ENCODE measurements at regions of chr20 and their contacts with region 1.

Region 1: GRCh38 chr20:21235484-21236445 is 67.4 kb upstream of the XRN2 start:
- DNase-seq: peak; percentile 66
- ATAC-seq: peak; percentile 86

Region 2: DNA sequence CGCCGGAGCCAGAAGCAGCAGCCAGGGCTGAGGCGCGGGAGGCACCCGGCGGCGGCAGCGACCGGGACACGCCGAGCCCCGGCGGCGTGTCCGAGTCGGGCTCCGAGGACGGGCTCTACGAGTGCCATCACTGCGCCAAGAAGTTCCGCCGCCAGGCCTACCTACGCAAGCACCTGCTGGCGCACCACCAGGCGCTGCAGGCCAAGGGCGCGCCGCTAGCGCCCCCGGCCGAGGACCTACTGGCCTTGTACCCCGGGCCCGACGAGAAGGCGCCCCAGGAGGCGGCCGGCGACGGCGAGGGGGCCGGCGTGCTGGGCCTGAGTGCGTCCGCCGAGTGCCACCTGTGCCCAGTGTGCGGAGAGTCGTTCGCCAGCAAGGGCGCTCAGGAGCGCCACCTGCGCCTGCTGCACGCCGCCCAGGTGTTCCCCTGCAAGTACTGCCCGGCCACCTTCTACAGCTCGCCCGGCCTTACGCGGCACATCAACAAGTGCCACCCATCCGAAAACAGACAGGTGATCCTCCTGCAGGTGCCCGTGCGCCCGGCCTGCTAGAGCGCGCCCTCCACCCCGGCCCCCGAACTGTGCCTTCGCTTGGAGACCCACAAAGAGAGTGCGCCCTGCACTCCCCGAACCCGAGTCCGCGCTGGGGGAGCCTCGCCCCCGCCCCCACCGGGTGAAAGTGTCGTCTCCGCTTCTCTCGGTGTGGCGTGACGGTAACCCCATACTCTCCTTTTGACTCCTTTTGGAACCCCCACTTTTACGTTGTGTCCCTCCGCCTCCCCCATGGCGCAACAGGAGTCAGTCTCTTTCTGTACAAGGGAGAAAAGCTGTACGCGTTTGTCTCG is 866.3 kb before region 1 on chr20:
- intact Hi-C with region 1: no loop called
- DNase-seq: no peak
- ATAC-seq: peak; percentile 36

Region 3: DNA sequence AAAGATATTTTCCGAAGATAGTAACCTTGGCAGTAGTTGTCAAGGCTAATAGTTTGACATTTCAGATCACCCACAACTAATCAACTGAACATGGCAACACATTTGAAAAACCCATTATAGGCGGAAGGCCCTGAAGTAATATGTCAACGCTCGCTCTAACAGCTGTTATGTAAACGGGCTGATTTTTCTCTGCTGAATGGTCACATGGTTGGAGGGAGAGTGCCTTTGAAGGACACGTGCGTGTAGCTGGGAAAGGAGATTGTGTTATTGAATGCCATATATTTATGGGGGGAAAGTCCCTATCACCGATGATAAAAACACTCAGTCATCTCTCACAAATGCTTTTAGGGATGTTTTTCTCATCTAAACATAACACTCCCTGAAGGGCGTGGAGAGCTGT is 363.3 kb before region 1 on chr20:
- intact Hi-C with region 1: loop called (anchors 10 kb)
- DNase-seq: no peak
- ATAC-seq: no peak

Region 4: DNA sequence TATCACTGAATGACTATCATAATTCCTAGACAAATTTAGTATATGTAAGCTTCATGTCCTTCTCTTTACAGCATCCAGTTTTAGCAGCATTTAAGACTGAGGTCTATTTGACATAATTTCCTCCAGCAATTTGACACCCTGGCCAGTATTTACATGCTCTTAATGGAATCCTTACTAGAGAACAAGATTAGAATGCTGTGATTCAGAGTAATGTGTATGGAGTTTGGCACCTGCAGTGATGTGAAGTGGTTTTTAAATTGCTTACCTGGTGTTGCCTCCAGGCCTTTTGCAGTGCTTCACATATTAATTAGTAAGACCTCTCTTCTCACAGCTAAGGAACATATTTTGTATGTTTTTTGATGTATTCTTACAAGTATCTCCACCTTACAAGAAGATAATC is 151.8 kb after region 1 on chr20:
- intact Hi-C with region 1: no loop called
- DNase-seq: no peak
- ATAC-seq: no peak

Region 5: GRCh38 chr20:21505161-21505809 is 269.5 kb after region 1 on chr20:
- intact Hi-C with region 1: loop called (anchors 2 kb)
- DNase-seq: peak; percentile 84
- ATAC-seq: peak; percentile 87

Region 6: GRCh38 chr20:21571841-21572690 is 336.3 kb after region 1 on chr20:
- intact Hi-C with region 1: loop called (anchors 5 kb)
- DNase-seq: no peak
- ATAC-seq: no peak

Measured in Right ventricle myocardium superior (tissue), 1 donor.